CD8-positive, alpha-beta T cell (primary cell): ENCODE measurements at regions of chr6 and their contacts with region 1.

Region 1: GRCh38 chr6:90251295-90251992 is 45.2 kb downstream of the BACH2 start:
- DNase-seq: no peak
- ATAC-seq: peak; percentile 21
- H3K4me3 ChIP-seq: no peak overlapping the region
- H3K4me3 Mint-ChIP-seq: no peak overlapping the region
- H3K27ac ChIP-seq: no peak overlapping the region
- H3K27ac Mint-ChIP-seq: peak overlapping the region; percentile 75
- H3K4me1 ChIP-seq: peaks cover 73% of the 10 kb centered on the region
- H3K4me1 Mint-ChIP-seq: peaks cover 78% of the 10 kb centered on the region
- H3K27me3 ChIP-seq: no peaks in the 10 kb centered on the region
- H3K27me3 Mint-ChIP-seq: no peaks in the 10 kb centered on the region
- CTCF ChIP-seq: no peak

Region 2: DNA sequence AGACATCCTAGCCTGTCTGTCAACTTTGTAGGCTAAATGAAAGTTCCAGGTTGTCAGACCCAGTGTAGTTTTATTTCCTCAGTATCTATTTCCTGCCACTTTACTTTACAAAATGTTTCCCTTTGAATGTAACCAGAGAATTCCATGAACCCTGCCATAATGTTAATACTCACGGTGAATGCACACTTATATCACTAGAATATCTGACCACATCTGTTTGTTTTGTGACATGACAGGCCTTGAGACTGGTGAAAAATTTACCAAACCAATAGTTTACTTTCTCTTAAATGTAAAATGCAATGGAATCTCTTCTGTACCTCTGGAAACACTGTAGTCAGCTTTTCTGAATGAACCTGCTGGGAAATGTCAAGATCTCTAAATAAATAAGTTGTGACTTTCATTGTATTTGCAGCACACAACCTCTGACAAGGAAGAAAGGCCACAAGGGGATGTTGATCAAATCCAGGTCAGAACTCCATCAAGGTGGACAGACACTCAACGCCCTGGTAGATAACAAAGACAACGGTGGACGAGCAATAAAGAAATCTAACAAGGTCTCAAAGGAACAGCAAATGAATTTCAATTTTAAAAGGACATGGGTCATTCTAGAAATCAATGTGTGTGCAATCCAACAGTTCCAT is 14.0 kb before region 1 on chr6:
- CTCF ChIA-PET with region 1: interaction called, 4 read pairs
- POLR2A ChIA-PET with region 1: interaction called, 6 read pairs
- intact Hi-C with region 1: loop called in 1 of 2 experiments (anchors 2 kb)
- DNase-seq: no peak
- ATAC-seq: no peak
- H3K4me3 ChIP-seq: no peak overlapping the region
- H3K4me3 Mint-ChIP-seq: no peak overlapping the region
- H3K27ac ChIP-seq: no peak overlapping the region
- H3K27ac Mint-ChIP-seq: peak overlapping the region; percentile 56
- H3K4me1 ChIP-seq: peaks cover 78% of the 10 kb centered on the region
- H3K4me1 Mint-ChIP-seq: peaks cover 84% of the 10 kb centered on the region
- H3K27me3 ChIP-seq: no peaks in the 10 kb centered on the region
- H3K27me3 Mint-ChIP-seq: no peaks in the 10 kb centered on the region
- CTCF ChIP-seq: no peak

Region 3: DNA sequence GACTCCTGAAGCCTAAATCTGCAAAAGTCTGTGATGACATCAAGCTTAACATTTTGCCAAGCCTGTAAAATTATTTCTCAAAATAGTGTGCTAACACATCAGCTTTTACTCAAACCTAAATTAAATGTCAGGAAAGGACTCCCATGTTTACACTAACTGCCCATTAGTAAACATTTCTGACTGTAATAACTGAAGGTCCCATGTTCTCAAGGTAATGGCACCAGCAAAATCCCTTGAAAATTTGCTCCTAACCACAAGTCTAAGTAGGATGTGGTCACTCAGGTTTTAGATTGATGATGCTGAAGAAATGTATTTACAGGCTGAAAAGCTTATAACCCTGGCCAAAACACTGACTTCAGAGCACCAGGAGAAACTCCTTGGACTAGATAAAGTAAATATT is 12.2 kb after region 1 on chr6:
- CTCF ChIA-PET with region 1: interaction called, 3 read pairs
- POLR2A ChIA-PET with region 1: interaction called, 4 read pairs
- intact Hi-C with region 1: loop called (anchors 2 kb)
- DNase-seq: no peak
- ATAC-seq: no peak
- H3K4me3 ChIP-seq: no peak overlapping the region
- H3K4me3 Mint-ChIP-seq: no peak overlapping the region
- H3K27ac ChIP-seq: peak overlapping the region in 1 of 2 experiments; percentile 2
- H3K27ac Mint-ChIP-seq: peak overlapping the region; percentile 85
- H3K4me1 ChIP-seq: peaks cover 73% of the 10 kb centered on the region
- H3K4me1 Mint-ChIP-seq: peaks cover 93% of the 10 kb centered on the region
- H3K27me3 ChIP-seq: no peaks in the 10 kb centered on the region
- H3K27me3 Mint-ChIP-seq: no peaks in the 10 kb centered on the region
- CTCF ChIP-seq: no peak

Region 4: DNA sequence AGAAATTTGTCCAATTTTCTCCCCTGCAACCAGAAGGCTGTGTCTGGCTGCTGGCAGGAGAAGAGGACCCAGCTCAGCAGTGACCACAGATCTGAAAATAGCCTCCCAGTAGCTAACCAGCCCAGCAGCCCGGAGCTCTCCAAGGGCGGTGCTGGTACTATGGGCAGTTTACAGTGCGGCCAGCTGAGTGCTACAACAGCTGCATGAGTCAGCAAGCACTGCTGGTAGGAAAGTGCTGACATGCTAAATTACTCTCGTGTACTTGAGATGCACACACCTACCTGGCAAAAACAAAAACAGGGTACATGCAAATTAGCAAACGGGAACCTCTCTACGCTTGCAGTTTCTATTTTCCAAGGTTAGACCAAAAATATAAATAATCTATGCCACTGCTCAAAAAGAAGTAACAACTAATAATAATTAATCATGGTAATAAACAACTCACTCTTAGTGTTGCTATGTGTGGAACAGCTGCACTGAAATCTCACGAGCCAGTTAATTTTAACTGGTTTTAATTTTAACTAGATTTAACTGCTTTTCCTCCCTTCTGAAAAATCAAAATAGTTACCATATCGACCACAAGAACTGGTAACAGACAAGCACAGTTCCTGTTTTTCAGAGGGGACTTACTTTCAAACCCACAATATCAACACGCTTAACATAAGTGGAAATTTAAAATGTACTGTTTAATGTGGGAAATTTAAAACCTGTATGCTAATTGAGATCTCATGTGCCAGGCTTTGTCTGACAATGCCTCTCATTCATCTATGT is 34.4 kb after region 1 on chr6:
- CTCF ChIA-PET with region 1: no interaction called
- POLR2A ChIA-PET with region 1: no interaction called
- intact Hi-C with region 1: loop called (anchors 5 kb)
- DNase-seq: peak in 5 of 9 experiments; percentile 46 to 77 (median 64)
- ATAC-seq: peak; percentile 46
- H3K4me3 ChIP-seq: peak overlapping the region; percentile 30 to 62
- H3K4me3 Mint-ChIP-seq: peak overlapping the region; percentile 83
- H3K27ac ChIP-seq: peak overlapping the region; percentile 1 to 74
- H3K27ac Mint-ChIP-seq: peak overlapping the region; percentile 93
- H3K4me1 ChIP-seq: peaks cover 93% of the 10 kb centered on the region
- H3K4me1 Mint-ChIP-seq: peaks cover 90% of the 10 kb centered on the region
- H3K27me3 ChIP-seq: no peaks in the 10 kb centered on the region
- H3K27me3 Mint-ChIP-seq: no peaks in the 10 kb centered on the region
- CTCF ChIP-seq: no peak